Activated T-helper 2 cell treated with anti-CD3 and anti-CD28 coated beads, Interferon-gamma antibody, Interleukin-2, Interleukin-4, amounts not matched to agents 10 μg/mL and 5 μg/mL and 100 μg/mL, durations not matched to agents 14 hours and 24 hours and 36 hours (primary cell): ENCODE measurements at regions of chr17 and their contacts with region 1.

Region 1: DNA sequence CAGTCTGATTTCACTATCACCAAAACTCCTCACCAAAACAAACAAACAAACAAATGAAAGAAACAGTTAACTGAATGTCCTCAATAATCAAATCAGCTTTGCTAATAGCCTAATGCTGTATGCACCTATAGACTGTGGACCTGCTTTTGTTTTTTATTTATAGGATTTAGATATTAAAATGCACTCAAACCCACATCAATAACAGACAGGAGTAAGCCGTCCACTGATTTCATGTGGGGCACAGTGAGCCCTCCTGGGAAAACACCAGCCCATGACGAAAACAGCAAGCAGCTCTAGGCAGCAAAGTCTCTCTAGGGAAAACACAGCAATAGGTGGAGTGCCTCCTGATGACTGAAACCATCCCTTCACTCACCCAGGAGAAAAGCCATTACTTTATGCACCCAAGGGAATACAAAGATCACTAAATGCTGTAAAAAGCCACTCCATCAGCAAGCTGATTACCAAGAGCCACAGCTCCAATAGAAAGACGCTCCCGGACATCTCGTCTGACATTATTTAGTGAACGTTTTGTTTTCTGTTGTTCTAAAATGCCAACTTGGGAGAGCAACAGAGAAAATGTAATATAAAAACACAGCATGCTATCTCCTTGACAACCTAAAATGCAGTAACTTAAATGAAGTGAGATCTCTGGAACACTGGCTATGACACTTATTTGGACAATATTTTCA is 47.8 kb downstream of the ANKFY1 start:
- DNase-seq: no peak
- H3K4me3 Mint-ChIP-seq: no peak overlapping the region
- H3K27ac Mint-ChIP-seq: peak overlapping the region; percentile 59
- H3K4me1 Mint-ChIP-seq: peaks cover 9% of the 10 kb centered on the region
- H3K27me3 Mint-ChIP-seq: no peaks in the 10 kb centered on the region

Region 2: DNA sequence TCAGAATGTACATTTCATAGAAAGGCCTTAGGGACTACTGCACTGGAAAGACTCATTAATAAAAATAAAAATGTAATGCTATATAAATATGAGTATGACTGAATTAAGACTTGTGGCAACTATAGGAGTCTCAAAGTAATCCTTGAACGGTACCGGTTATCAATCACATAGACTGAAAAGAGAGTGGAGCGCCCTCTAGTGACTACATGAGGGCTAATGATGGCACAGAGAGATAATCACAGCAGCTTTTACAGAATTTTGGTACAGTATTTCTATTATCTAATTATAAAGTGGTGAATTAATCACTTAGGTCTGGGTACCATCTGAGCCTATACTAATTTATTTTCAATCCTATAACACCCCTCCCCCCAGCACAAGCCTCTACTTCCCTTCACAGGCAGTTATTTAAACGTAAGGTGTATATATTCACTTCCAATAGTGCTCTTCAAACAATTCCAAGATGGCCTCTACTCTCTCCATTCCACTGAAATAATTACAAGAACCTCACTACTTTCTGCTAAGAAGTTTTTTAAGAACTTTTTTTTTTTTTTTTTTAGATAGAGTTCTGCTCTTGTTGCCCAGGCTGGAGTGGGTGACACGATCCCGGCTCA is 88.5 kb after region 1 on chr17:
- intact Hi-C with region 1: loop called (anchors 1 kb)
- DNase-seq: peak; percentile 16
- H3K4me3 Mint-ChIP-seq: no peak overlapping the region
- H3K27ac Mint-ChIP-seq: no peak overlapping the region
- H3K4me1 Mint-ChIP-seq: peaks cover 14% of the 10 kb centered on the region
- H3K27me3 Mint-ChIP-seq: no peaks in the 10 kb centered on the region

Region 3: DNA sequence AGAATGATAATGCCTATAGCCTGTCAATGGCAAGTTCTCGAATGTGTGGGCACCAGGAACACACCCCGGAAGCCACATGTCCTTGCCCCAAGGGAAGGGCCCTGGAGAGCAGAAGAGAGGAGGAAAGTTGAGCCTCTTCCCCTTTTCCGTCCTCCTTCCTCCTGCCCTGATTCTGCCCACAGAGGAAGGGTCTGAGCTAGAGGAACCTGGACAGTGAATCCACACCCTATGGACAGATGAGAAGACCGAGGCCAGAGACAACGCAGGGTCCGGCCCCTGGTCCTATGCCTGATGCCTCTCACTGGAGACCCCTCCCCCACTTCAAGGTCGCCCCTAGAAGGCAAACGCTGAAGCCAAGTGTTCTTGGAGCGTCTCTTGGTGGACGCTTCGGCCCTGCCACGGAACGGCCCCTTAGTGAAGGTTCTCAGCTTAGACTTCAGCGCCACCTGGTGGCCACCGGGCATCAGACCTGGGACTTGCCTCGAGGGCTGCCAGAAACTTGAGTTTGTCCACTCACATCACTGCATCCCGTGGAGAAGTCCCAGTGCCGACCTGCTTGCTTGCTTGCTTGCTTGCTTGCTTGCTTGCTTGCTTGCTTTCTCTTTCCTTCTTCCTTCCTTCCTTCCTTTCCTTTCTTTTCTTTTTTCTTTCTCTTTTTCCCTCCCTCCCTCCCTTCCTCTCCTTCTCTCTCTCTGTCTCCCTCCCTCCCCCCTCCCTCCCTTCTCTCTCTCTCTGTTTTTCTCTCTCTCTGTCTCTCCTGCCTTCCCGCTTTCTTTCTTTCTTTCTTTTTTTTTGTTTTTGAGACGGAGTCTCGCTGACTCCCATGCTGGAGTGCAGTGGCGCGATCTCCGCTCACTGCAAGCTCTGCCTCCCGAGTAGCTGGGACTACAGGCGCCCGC is 197.2 kb after region 1 on chr17:
- intact Hi-C with region 1: loop called (anchors 1 kb)
- DNase-seq: peak; percentile 83
- H3K4me3 Mint-ChIP-seq: peak overlapping the region; percentile 57
- H3K27ac Mint-ChIP-seq: peak overlapping the region; percentile 76
- H3K4me1 Mint-ChIP-seq: peaks cover 5% of the 10 kb centered on the region
- H3K27me3 Mint-ChIP-seq: no peaks in the 10 kb centered on the region